Heart right ventricle (tissue), 16 donors: ENCODE measurements at regions of chr2 and their contacts with region 1.

Region 1: GRCh38 chr2:237218756-237219155 is 133.1 kb downstream of the COPS8 start:
- DNase-seq: no peak
- ATAC-seq: no peak
- H3K4me3 ChIP-seq: no peak overlapping the region
- H3K27ac ChIP-seq: peak overlapping the region in 7 of 10 donors; percentile 7 to 75 (median 30)
- H3K4me1 ChIP-seq: peaks cover 4 to 29% (median 13%) of the 10 kb centered on the region in 9 donors
- H3K27me3 ChIP-seq: peaks cover 0 to 3% (median 0%) of the 10 kb centered on the region in 7 donors
- CTCF ChIP-seq: no peak

Region 2: DNA sequence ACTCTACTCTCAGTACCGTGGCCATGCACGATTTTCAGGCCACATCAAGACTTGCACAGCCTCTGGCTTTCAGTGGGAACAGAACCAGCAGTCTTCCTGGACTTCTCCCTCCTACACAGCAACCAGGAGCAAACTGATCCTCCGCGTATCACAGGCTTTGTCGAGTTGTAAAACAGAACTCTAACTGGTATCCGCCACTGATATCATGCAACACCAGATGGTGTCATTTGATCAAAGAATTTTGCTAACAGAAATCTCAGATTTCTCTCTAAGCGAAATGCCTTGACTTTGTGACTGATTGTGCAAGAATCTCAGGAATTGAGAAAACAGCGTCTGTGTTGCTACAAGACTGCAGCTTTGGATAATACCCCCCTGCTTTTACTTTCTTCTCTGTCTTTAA is 47.4 kb before region 1 on chr2:
- intact Hi-C with region 1: loop called in 1 of 10 experiments (anchors 2 kb)
- DNase-seq: no peak
- ATAC-seq: peak; percentile 49 to 89 (median 70)
- H3K4me3 ChIP-seq: no peak overlapping the region
- H3K27ac ChIP-seq: peak overlapping the region in 8 of 10 donors; percentile 40 to 70 (median 58)
- H3K4me1 ChIP-seq: peaks cover 0 to 12% (median 0%) of the 10 kb centered on the region in 9 donors
- H3K27me3 ChIP-seq: no peaks in the 10 kb centered on the region
- CTCF ChIP-seq: peak in 3 of 9 donors; percentile 13 to 39 (median 18)

Region 3: DNA sequence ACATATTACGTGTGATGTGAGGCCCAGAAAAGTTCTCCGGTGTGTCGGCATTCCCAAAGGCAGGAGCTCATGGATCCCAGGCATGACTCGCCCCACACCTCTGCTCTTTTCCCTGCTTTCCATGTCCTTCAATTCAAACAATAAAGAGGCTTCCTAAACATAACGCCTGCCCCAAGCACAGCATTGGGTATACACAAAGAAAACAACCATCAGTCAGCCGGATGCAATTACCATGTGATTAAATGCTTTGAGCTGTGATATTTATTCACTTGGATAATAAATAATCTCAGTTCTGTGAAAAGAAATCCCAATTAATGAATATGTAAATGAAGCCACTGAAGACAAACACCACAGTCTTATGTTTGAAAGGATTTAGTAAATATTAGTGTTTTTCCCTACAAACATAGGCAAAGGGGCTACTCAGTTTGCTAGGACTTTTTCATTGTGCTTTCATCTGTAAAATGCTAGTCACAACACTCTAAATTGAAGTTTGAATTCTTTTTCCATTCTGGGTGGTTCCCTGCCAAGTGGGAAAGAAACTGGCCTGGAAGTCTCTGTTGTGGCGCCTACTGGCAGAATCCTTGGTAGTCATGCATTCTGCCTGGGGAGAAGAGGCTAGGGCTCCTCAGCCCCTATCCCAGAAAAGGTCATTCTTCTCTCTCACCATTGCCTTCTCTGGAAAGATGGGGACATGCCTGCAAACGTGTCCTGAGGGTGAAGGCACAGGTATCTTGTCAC is 50.6 kb after region 1 on chr2:
- intact Hi-C with region 1: no loop called
- DNase-seq: no peak
- ATAC-seq: no peak
- H3K4me3 ChIP-seq: no peak overlapping the region
- H3K27ac ChIP-seq: no peak overlapping the region
- H3K4me1 ChIP-seq: peaks cover 0 to 14% (median under 1%) of the 10 kb centered on the region in 9 donors
- H3K27me3 ChIP-seq: no peaks in the 10 kb centered on the region
- CTCF ChIP-seq: no peak